Adrenal gland (tissue), 19 donors: ENCODE measurements at regions of chr3 and their contacts with region 1.

Region 1: DNA sequence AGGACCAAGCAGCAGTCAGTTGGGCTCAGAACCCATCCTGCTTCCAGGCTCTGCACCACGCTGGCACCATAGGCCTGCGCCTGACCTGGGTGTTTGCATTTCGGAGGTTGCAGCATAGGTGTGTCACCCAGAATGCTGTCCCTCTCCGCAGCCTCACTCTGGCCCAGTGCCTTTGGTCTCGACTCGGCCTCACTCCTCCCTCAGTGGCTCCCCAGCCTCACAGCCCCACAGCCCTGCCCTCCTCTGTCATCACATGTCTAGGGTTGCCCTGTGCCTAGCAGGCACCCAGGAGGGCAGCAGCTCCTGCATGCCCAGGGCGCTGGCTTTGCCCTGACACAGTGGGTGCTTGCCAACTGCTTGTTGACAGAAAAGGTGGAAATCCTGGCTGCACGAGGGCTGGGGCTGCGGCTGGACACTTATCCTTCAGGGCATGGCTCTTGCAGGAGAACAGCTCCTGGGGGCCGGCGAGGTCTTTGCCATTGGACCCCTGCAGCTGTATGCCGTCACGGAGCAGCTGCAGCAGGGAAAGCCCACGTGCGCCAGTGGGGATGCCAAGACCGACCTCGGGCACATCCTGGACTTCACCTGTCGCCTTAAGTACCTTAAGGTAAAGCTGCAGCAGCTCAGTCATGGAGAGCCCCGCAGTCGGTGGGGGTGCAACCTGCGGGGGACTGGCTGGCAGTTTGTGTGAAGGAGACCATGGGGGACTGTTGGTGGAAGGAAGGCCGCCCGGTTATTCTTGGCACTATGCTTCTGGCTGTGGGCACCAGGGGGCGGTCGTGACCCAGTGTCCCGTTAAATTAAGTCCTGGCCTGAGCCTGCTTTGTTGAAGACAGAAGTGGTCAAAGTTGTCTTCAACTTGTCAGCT is 16.2 kb downstream of the NISCH start:
- DNase-seq: peak; percentile 72 to 94 (median 83)
- H3K4me3 ChIP-seq: no peak overlapping the region
- H3K27ac ChIP-seq: peak overlapping the region in 2 of 5 donors; percentile 13 to 42
- H3K4me1 ChIP-seq: peaks cover 0 to 42% of the 10 kb centered on the region in 2 donors
- H3K27me3 ChIP-seq: no peaks in the 10 kb centered on the region
- CTCF ChIP-seq: peak; percentile 65 to 86 (median 76)
- POLR2A ChIP-seq: no peak

Region 2: GRCh38 chr3:52536369-52537164 is 65.0 kb after region 1 on chr3 and contains the start of gene UQCC5:
- intact Hi-C with region 1: loop called in 1 of 2 experiments (anchors 5 kb)
- DNase-seq: peak; percentile 97 to 99 (median 98)
- H3K4me3 ChIP-seq: peak within 1 kb of the TSS; percentile 20 to 84 (median 64)
- H3K27ac ChIP-seq: peak within 1 kb of the TSS; percentile 61 to 97 (median 91)
- H3K4me1 ChIP-seq: peaks cover 35 to 74% of the 10 kb centered on the region in 2 donors
- H3K27me3 ChIP-seq: no peaks in the 10 kb centered on the region
- CTCF ChIP-seq: no peak
- POLR2A ChIP-seq: peak; percentile 98 to 100
- total RNA-seq, gene UQCC5: 1.1 to 114 (median 71.2) TPM

Region 3: GRCh38 chr3:52685709-52686691 is 214.4 kb after region 1 on chr3 and contains the starts of genes GNL3 and PBRM1:
- intact Hi-C with region 1: loop called (anchors 5 to 10 kb)
- DNase-seq: peak; percentile 93 to 96 (median 93)
- H3K4me3 ChIP-seq: peak within 1 kb of the TSS; percentile 46 to 94 (median 64)
- H3K27ac ChIP-seq: peak within 1 kb of the TSS; percentile 75 to 100 (median 96)
- H3K4me1 ChIP-seq: peaks cover 37 to 48% of the 10 kb centered on the region in 2 donors
- H3K27me3 ChIP-seq: no peaks in the 10 kb centered on the region
- CTCF ChIP-seq: no peak
- POLR2A ChIP-seq: peak in 1 of 2 donors; percentile 79
- total RNA-seq, gene GNL3: 23.5 to 87.0 (median 54.2) TPM
- total RNA-seq, gene PBRM1: 32.9 to 108 (median 48.8) TPM

Region 4: GRCh38 chr3:52696830-52697621 is 225.4 kb after region 1 on chr3:
- intact Hi-C with region 1: loop called in 1 of 2 experiments (anchors 10 kb)
- DNase-seq: no peak
- H3K4me3 ChIP-seq: no peak overlapping the region
- H3K27ac ChIP-seq: no peak overlapping the region
- H3K4me1 ChIP-seq: peaks cover 4 to 11% of the 10 kb centered on the region in 2 donors
- H3K27me3 ChIP-seq: no peaks in the 10 kb centered on the region
- CTCF ChIP-seq: no peak
- POLR2A ChIP-seq: no peak